T-cell (primary cell): ENCODE measurements at regions of chr5 and their contacts with region 1.

Region 1: GRCh38 chr5:27479859-27480258 is 441.5 kb upstream of the CDH9 start:
- DNase-seq: no peak
- ATAC-seq: no peak
- H3K4me3 ChIP-seq: no peak overlapping the region
- H3K4me3 Mint-ChIP-seq: no peak overlapping the region
- H3K27ac ChIP-seq: no peak overlapping the region
- H3K27ac Mint-ChIP-seq: no peak overlapping the region
- H3K4me1 ChIP-seq: no peaks in the 10 kb centered on the region
- H3K4me1 Mint-ChIP-seq: no peaks in the 10 kb centered on the region
- H3K27me3 ChIP-seq: no peaks in the 10 kb centered on the region
- H3K27me3 Mint-ChIP-seq: no peaks in the 10 kb centered on the region

Region 2: GRCh38 chr5:27392716-27393115 is 87.1 kb before region 1 on chr5:
- CTCF ChIA-PET with region 1: no interaction called
- POLR2A ChIA-PET with region 1: no interaction called
- DNase-seq: no peak
- ATAC-seq: no peak
- H3K4me3 ChIP-seq: no peak overlapping the region
- H3K4me3 Mint-ChIP-seq: no peak overlapping the region
- H3K27ac ChIP-seq: no peak overlapping the region
- H3K27ac Mint-ChIP-seq: no peak overlapping the region
- H3K4me1 ChIP-seq: no peaks in the 10 kb centered on the region
- H3K4me1 Mint-ChIP-seq: no peaks in the 10 kb centered on the region
- H3K27me3 ChIP-seq: no peaks in the 10 kb centered on the region
- H3K27me3 Mint-ChIP-seq: no peaks in the 10 kb centered on the region

Region 3: GRCh38 chr5:27592231-27592630 is 112.4 kb after region 1 on chr5:
- CTCF ChIA-PET with region 1: interaction called in 1 of 2 experiments, 11 read pairs
- POLR2A ChIA-PET with region 1: no interaction called
- DNase-seq: no peak
- ATAC-seq: no peak
- H3K4me3 ChIP-seq: no peak overlapping the region
- H3K4me3 Mint-ChIP-seq: no peak overlapping the region
- H3K27ac ChIP-seq: no peak overlapping the region
- H3K27ac Mint-ChIP-seq: no peak overlapping the region
- H3K4me1 ChIP-seq: no peaks in the 10 kb centered on the region
- H3K4me1 Mint-ChIP-seq: no peaks in the 10 kb centered on the region
- H3K27me3 ChIP-seq: no peaks in the 10 kb centered on the region
- H3K27me3 Mint-ChIP-seq: no peaks in the 10 kb centered on the region